Head of caudate nucleus (tissue), 42 donors: ENCODE measurements at regions of chr1 and their contacts with region 1.

Region 1: GRCh38 chr1:179954493-179955297 is at the start of gene CEP350:
- DNase-seq: peak; percentile 91 to 99 (median 96)

Region 2: GRCh38 chr1:179882243-179883039 is 72.3 kb before region 1 on chr1 and contains the start of gene TOR1AIP1:
- intact Hi-C with region 1: loop called (anchors 5 kb)
- DNase-seq: peak; percentile 88 to 99 (median 97)